ENCODE measurements at regions of chr18 and their contacts with region 1.

Region 1: GRCh38 chr18:23131693-23132319 is 3.5 kb upstream of the CABLES1 start:
- DNase-seq: peak; percentile 85
- ATAC-seq: no peak
- H3K4me3 ChIP-seq: no peak overlapping the region
- H3K4me3 Mint-ChIP-seq: no peak overlapping the region
- H3K27ac ChIP-seq: no peak overlapping the region
- H3K27ac Mint-ChIP-seq: no peak overlapping the region
- H3K4me1 ChIP-seq: peaks cover 24 to 28% of the 10 kb centered on the region in 2 donors
- H3K4me1 Mint-ChIP-seq: peaks cover 21% of the 10 kb centered on the region
- H3K27me3 ChIP-seq: peaks cover 0 to 33% (median 16%) of the 10 kb centered on the region in 4 experiments
- H3K27me3 Mint-ChIP-seq: peaks cover 16% of the 10 kb centered on the region
- CTCF ChIP-seq: peak; percentile 95

Region 2: DNA sequence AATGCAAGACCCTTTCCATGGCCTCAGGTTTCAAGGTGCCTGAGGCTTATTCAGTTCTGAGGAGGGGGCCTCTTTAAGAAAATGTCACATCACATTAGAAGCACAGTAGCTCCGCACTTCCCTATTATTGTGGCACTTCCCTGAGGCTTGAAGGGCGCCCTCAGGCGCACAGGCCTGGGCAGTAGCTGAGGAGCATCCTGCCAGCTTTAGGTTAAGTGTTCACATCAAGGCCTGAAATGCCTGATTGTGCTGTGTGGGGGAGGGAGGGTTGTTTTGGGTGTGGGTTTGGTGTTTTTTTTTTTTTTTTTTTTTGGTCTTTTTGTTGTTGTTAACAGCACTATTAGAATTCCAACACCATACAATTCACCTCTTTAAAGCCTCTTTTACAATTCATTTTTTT is 111.4 kb after region 1 on chr18:
- CTCF ChIA-PET with region 1: interaction called, 11 read pairs
- POLR2A ChIA-PET with region 1: interaction called, 7 read pairs
- intact Hi-C with region 1: no loop called
- DNase-seq: peak; percentile 46
- ATAC-seq: no peak
- H3K4me3 ChIP-seq: no peak overlapping the region
- H3K4me3 Mint-ChIP-seq: no peak overlapping the region
- H3K27ac ChIP-seq: no peak overlapping the region
- H3K27ac Mint-ChIP-seq: no peak overlapping the region
- H3K4me1 ChIP-seq: peaks cover 3 to 8% of the 10 kb centered on the region in 2 donors
- H3K4me1 Mint-ChIP-seq: peaks cover 26% of the 10 kb centered on the region
- H3K27me3 ChIP-seq: no peaks in the 10 kb centered on the region
- H3K27me3 Mint-ChIP-seq: peaks cover 4% of the 10 kb centered on the region
- CTCF ChIP-seq: no peak

Region 3: GRCh38 chr18:23468753-23469459 is 337.1 kb after region 1 on chr18:
- CTCF ChIA-PET with region 1: no interaction called
- POLR2A ChIA-PET with region 1: no interaction called
- intact Hi-C with region 1: no loop called
- DNase-seq: no peak
- ATAC-seq: no peak
- H3K4me3 ChIP-seq: no peak overlapping the region
- H3K4me3 Mint-ChIP-seq: no peak overlapping the region
- H3K27ac ChIP-seq: peak overlapping the region in 1 of 2 donors; percentile 38
- H3K27ac Mint-ChIP-seq: no peak overlapping the region
- H3K4me1 ChIP-seq: no peaks in the 10 kb centered on the region
- H3K4me1 Mint-ChIP-seq: no peaks in the 10 kb centered on the region
- H3K27me3 ChIP-seq: no peaks in the 10 kb centered on the region
- H3K27me3 Mint-ChIP-seq: no peaks in the 10 kb centered on the region
- CTCF ChIP-seq: no peak